Panc1 (cell line): ENCODE measurements at regions of chr1 and their contacts with region 1.

Region 1: GRCh38 chr1:209248649-209249279 is 334.8 kb upstream of the CAMK1G start:
- DNase-seq: peak; percentile 71
- ATAC-seq: peak; percentile 85
- H3K4me3 ChIP-seq: no peak overlapping the region
- H3K27ac ChIP-seq: no peak overlapping the region
- H3K4me1 ChIP-seq: no peaks in the 10 kb centered on the region
- H3K27me3 ChIP-seq: no peaks in the 10 kb centered on the region
- CTCF ChIP-seq: peak; percentile 92

Region 2: GRCh38 chr1:208652296-208653160 is 596.2 kb before region 1 on chr1:
- CTCF ChIA-PET with region 1: no interaction called
- POLR2A ChIA-PET with region 1: no interaction called
- in situ Hi-C with region 1: no loop called
- intact Hi-C with region 1: loop called (anchors 2 kb)
- DNase-seq: peak; percentile 45
- ATAC-seq: peak; percentile 82
- H3K4me3 ChIP-seq: no peak overlapping the region
- H3K27ac ChIP-seq: no peak overlapping the region
- H3K4me1 ChIP-seq: no peaks in the 10 kb centered on the region; the same call in 1 of the 2 replicates
- H3K27me3 ChIP-seq: no peaks in the 10 kb centered on the region
- CTCF ChIP-seq: peak; percentile 88

Region 3: DNA sequence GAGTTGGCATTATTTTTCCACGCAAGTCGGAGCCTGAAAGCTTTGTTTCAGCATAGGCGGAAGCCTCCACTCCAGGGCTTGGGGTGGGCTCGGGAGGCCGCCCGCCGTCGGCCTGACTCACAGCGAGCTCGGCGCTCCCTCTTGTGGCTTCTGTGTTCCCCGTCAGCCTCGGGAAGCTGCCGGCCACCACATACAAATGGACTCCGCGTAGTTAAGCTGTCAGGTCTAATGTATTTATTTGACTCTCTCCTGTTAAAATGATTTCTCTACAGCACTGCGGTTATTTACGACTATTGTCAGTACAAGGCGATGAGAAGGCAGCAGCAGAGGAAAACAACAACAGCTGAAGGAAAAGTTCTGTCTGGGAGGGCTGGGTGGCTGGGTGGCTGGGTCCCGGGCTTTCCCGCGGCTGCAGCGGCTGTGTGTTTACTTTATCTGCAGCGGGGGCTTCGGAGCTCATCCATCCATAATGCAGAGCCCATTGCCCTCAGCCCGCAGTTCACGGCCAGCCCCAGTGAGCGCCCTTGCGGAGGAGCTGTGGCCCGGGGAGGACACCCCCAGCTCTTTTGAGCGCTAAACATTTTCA is 41.0 kb before region 1 on chr1:
- CTCF ChIA-PET with region 1: interaction called, 4 read pairs
- POLR2A ChIA-PET with region 1: no interaction called
- in situ Hi-C with region 1: no loop called
- intact Hi-C with region 1: loop called (anchors 5 kb)
- DNase-seq: no peak
- ATAC-seq: peak; percentile 92
- H3K4me3 ChIP-seq: peak overlapping the region in 1 of 2 experiments; percentile 11; a peak in 1 of 4 replicates
- H3K27ac ChIP-seq: no peak overlapping the region
- H3K4me1 ChIP-seq: no peaks in the 10 kb centered on the region
- H3K27me3 ChIP-seq: peaks cover 14% of the 10 kb centered on the region; the same call in 1 of the 2 replicates
- CTCF ChIP-seq: peak; percentile 90